Ovary (tissue), 10 donors: ENCODE measurements at regions of chrX and their contacts with region 1.

Region 1: GRCh38 chrX:26138274-26138673 is at the start of gene MAGEB18:
- DNase-seq: no peak
- H3K4me3 ChIP-seq: no peak within 1 kb of the TSS
- H3K27ac ChIP-seq: no peak within 1 kb of the TSS
- H3K4me1 ChIP-seq: no peaks in the 10 kb centered on the region
- H3K27me3 ChIP-seq: no peaks in the 10 kb centered on the region
- CTCF ChIP-seq: no peak
- EP300 ChIP-seq: no peak
- POLR2A ChIP-seq: no peak
- total RNA-seq, gene MAGEB18: not detected

Region 2: GRCh38 chrX:24321741-24322395 is 1816.4 kb before region 1 on chrX:
- intact Hi-C with region 1: loop called in 1 of 4 experiments (anchors 5 kb)
- DNase-seq: no peak
- H3K4me3 ChIP-seq: no peak overlapping the region
- H3K27ac ChIP-seq: no peak overlapping the region
- H3K4me1 ChIP-seq: no peaks in the 10 kb centered on the region
- H3K27me3 ChIP-seq: no peaks in the 10 kb centered on the region
- CTCF ChIP-seq: no peak
- EP300 ChIP-seq: no peak
- POLR2A ChIP-seq: no peak